ENCODE measurements at regions of chr1 and their contacts with region 1.

Region 1: DNA sequence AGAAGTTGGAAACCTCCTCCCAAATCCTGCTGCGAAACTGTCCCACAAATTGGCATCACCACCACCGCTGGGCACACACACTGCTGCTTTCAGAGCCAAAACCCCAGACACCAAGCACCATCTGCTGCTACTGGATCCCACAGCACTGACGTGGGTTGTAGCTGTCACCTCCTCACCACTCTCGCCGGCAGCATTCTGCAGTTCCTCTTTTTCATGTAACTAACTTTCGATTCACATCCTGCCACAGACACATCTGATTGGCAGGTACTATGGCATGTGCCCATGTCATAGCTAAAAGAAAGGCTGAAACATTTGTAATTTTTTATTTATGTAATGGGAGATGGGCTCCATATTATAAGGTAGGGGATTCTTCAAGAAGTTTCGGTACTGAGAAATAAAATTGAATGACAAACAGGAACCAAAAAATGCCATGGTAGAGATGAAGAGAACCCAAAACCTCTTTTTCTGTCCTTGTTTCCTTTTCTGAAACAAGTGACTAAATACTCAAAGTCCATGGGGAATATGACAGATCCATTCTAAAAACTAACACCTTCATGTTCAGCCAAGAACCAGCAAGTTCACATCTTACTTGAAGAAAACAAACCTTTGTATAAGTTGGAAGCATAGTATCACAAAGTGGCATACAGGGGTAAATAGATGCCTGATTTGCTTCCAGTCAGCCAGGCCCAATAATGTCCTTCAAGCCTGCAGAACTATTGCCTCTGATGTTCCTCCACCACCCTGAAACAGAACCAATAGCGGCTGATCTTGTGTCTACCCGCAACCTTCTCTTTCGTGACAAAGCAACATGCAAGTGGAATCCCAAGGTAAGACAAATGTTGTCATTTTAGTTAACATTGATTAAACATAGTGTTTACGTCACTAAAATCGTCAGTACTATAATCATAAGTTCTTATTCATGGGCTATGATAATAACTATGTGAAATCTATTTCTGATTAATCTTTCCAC is 26.6 kb upstream of the RGS13 start:
- DNase-seq: peak; percentile 96
- ATAC-seq: peak; percentile 90
- H3K4me3 ChIP-seq: peak overlapping the region; percentile 8; the same call in 1 of the 2 replicates
- H3K27ac ChIP-seq: peak overlapping the region; percentile 88
- H3K4me1 ChIP-seq: peaks cover 23% of the 10 kb centered on the region
- H3K27me3 ChIP-seq: no peaks in the 10 kb centered on the region
- CTCF ChIP-seq: peak in 2 of 3 experiments; percentile 6 to 55; a peak in 3 of 6 replicates
- EP300 ChIP-seq: peak; percentile 98 to 100
- POLR2A ChIP-seq: no peak
- RAD21 ChIP-seq: peak; percentile 60; the same call in 1 of the 2 replicates

Region 2: GRCh38 chr1:192491804-192492554 is 117.4 kb before region 1 on chr1:
- CTCF ChIA-PET with region 1: interaction called, 6 read pairs
- POLR2A ChIA-PET with region 1: no interaction called
- RAD21 ChIA-PET with region 1: interaction called, 4 read pairs
- SMC1A ChIA-PET with region 1: interaction called, 16 read pairs
- in situ Hi-C with region 1: no loop called
- intact Hi-C with region 1: no loop called
- DNase-seq: no peak
- ATAC-seq: no peak
- H3K4me3 ChIP-seq: no peak overlapping the region
- H3K27ac ChIP-seq: no peak overlapping the region
- H3K4me1 ChIP-seq: no peaks in the 10 kb centered on the region
- H3K27me3 ChIP-seq: no peaks in the 10 kb centered on the region
- CTCF ChIP-seq: no peak
- EP300 ChIP-seq: no peak
- POLR2A ChIP-seq: no peak
- RAD21 ChIP-seq: no peak

Region 3: DNA sequence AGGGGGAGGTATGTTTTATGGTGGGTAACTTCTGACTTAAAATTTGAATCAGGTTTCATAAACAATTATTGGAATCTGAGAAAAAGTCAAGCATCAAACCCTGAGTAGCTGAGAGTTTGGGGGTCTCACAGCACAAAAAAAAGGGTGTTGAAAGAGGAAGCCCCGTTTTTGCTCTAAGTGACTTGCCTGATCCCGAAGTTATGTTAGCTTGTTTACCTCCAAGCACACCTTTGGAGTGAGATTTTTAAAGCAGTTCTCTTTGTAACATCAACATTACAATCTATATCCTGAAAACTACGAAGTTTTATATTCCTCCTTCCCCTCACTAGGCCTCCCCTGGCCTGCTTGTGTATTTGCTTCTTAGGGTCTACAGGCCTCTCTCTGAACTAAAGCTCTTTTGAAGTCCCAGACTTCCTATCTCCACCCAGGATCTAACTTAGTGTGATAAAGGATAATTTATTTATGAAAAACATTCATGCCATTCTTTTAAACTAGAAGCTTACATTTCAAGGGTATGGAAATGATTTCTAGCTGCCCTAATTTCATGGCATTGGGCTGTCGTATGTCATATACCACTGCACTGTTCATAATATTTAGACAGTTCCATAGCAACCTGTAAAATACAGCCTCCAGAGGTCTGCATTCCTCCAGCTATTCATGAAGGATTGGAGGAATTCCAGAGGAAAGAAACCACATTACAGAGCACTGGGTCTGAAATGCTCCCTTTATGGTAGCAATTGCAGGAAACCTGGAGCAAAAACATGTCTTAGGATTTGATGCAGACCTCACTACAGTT is 69.9 kb before region 1 on chr1:
- CTCF ChIA-PET with region 1: interaction called, 16 read pairs
- POLR2A ChIA-PET with region 1: interaction called, 6 read pairs
- RAD21 ChIA-PET with region 1: interaction called, 37 read pairs
- SMC1A ChIA-PET with region 1: interaction called, 43 read pairs
- in situ Hi-C with region 1: no loop called
- intact Hi-C with region 1: no loop called
- DNase-seq: no peak
- ATAC-seq: peak; percentile 40
- H3K4me3 ChIP-seq: no peak overlapping the region
- H3K27ac ChIP-seq: peak overlapping the region; percentile 81
- H3K4me1 ChIP-seq: peaks cover 24% of the 10 kb centered on the region
- H3K27me3 ChIP-seq: no peaks in the 10 kb centered on the region
- CTCF ChIP-seq: no peak
- EP300 ChIP-seq: no peak
- POLR2A ChIP-seq: no peak
- RAD21 ChIP-seq: no peak

Region 4: GRCh38 chr1:192573499-192573898 is 35.9 kb before region 1 on chr1:
- CTCF ChIA-PET with region 1: interaction called, 18 read pairs
- POLR2A ChIA-PET with region 1: interaction called, 5 read pairs
- RAD21 ChIA-PET with region 1: interaction called, 65 read pairs
- SMC1A ChIA-PET with region 1: interaction called, 175 read pairs
- in situ Hi-C with region 1: no loop called
- intact Hi-C with region 1: no loop called
- DNase-seq: no peak
- ATAC-seq: no peak
- H3K4me3 ChIP-seq: no peak overlapping the region
- H3K27ac ChIP-seq: no peak overlapping the region
- H3K4me1 ChIP-seq: peaks cover 3% of the 10 kb centered on the region; the same call in 1 of the 2 replicates
- H3K27me3 ChIP-seq: no peaks in the 10 kb centered on the region
- CTCF ChIP-seq: no peak
- EP300 ChIP-seq: no peak
- POLR2A ChIP-seq: no peak
- RAD21 ChIP-seq: no peak

Region 5: GRCh38 chr1:192626366-192627179 is 17.2 kb after region 1 on chr1:
- CTCF ChIA-PET with region 1: interaction called, 28 read pairs
- POLR2A ChIA-PET with region 1: no interaction called
- RAD21 ChIA-PET with region 1: interaction called, 8 read pairs
- SMC1A ChIA-PET with region 1: interaction called, 18 read pairs
- in situ Hi-C with region 1: no loop called
- intact Hi-C with region 1: loop called (anchors 2 kb)
- DNase-seq: peak; percentile 66
- ATAC-seq: peak; percentile 84
- H3K4me3 ChIP-seq: no peak overlapping the region
- H3K27ac ChIP-seq: no peak overlapping the region
- H3K4me1 ChIP-seq: no peaks in the 10 kb centered on the region
- H3K27me3 ChIP-seq: no peaks in the 10 kb centered on the region
- CTCF ChIP-seq: no peak
- EP300 ChIP-seq: peak in 1 of 2 experiments; percentile 67; a peak in 1 of 4 replicates
- POLR2A ChIP-seq: no peak
- RAD21 ChIP-seq: no peak

Region 6: GRCh38 chr1:192657760-192658159 is 48.4 kb after region 1 on chr1:
- CTCF ChIA-PET with region 1: no interaction called
- POLR2A ChIA-PET with region 1: no interaction called
- RAD21 ChIA-PET with region 1: no interaction called
- SMC1A ChIA-PET with region 1: no interaction called
- in situ Hi-C with region 1: no loop called
- intact Hi-C with region 1: no loop called
- DNase-seq: no peak
- ATAC-seq: no peak
- H3K4me3 ChIP-seq: no peak overlapping the region
- H3K27ac ChIP-seq: no peak overlapping the region
- H3K4me1 ChIP-seq: no peaks in the 10 kb centered on the region
- H3K27me3 ChIP-seq: no peaks in the 10 kb centered on the region
- CTCF ChIP-seq: no peak
- EP300 ChIP-seq: no peak
- POLR2A ChIP-seq: no peak
- RAD21 ChIP-seq: no peak

Region 7: GRCh38 chr1:193019442-193020026 is 410.1 kb after region 1 on chr1:
- CTCF ChIA-PET with region 1: interaction called, 10 read pairs
- POLR2A ChIA-PET with region 1: no interaction called
- RAD21 ChIA-PET with region 1: interaction called, 12 read pairs
- SMC1A ChIA-PET with region 1: interaction called, 13 read pairs
- in situ Hi-C with region 1: no loop called
- intact Hi-C with region 1: loop called (anchors 10 kb)
- DNase-seq: no peak
- ATAC-seq: peak; percentile 76
- H3K4me3 ChIP-seq: no peak overlapping the region
- H3K27ac ChIP-seq: no peak overlapping the region
- H3K4me1 ChIP-seq: no peaks in the 10 kb centered on the region
- H3K27me3 ChIP-seq: no peaks in the 10 kb centered on the region
- CTCF ChIP-seq: peak; percentile 22 to 53 (median 33); a peak in 4 of 6 replicates
- EP300 ChIP-seq: no peak
- POLR2A ChIP-seq: no peak
- RAD21 ChIP-seq: peak; percentile 62